Endothelial cell of umbilical vein (primary cell): ENCODE measurements at regions of chr12 and their contacts with region 1.

Region 1: DNA sequence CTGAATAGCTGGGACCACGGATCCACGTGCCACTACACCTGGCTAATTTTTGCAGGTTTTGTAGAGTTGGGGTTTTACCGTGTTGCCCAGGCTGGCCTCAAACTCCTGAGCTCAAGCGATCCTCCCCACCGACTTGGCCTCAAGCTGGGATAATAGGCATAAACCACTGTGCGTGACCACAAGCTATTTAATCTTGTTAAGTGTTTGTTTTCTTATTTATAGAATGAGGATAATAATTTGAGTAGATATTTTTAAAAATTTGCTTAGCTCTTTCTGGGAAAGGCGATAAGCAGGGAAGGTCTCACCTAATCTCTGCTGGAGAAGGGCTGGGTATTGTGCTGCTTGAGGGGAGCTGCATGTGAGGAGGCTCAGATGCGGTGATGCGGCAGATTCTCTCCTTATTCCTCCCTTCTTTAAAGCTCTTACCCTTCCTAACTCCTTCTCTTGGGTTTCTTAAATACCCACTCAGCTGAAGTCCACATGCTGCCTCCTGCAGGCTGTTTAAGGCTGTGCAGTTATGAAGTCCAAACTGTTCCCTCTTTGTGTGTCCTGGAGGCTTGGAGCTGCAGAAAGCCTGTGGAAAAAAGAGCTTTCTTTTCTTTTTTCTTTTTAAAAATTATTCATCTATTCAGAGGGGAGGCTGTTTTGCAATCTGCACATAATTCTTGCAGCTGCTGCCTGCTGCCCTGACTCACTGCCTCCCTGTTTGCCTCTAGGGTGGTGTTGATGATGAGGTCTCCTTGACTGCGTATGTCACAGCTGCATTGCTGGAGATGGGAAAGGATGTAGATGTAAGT is 37.9 kb downstream of the A2ML1 start:
- DNase-seq: peak; percentile 59
- H3K4me3 ChIP-seq: no peak overlapping the region
- H3K27ac ChIP-seq: no peak overlapping the region
- H3K4me1 ChIP-seq: no peaks in the 10 kb centered on the region
- H3K27me3 ChIP-seq: no peaks in the 10 kb centered on the region
- CTCF ChIP-seq: peak; percentile 66 to 70
- POLR2A ChIP-seq: no peak

Region 2: DNA sequence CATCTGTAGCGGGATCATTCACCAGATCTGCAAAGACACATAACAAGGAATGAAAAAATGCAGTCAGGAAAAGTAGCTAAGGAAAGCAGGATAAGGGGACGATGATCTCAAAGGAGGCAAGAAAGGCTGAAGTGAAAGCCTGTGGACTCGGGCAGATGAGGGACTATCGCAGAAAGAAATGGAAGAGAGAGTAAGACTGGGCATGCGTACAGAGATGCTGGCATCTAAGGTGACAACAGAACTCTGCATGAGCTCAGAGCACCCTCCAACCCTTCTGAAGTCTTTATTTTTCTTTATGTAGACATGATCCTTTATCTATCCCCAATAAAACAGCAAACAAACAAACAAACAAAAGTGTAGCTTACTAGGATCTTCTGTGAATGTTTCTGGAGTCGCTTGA is 204.9 kb before region 1 on chr12:
- CTCF ChIA-PET with region 1: interaction called, 167 read pairs
- POLR2A ChIA-PET with region 1: no interaction called
- dilution Hi-C with region 1: no loop called
- intact Hi-C with region 1: loop called (anchors 1 kb)
- DNase-seq: no peak
- H3K4me3 ChIP-seq: no peak overlapping the region
- H3K27ac ChIP-seq: no peak overlapping the region
- H3K4me1 ChIP-seq: no peaks in the 10 kb centered on the region
- H3K27me3 ChIP-seq: no peaks in the 10 kb centered on the region
- CTCF ChIP-seq: no peak
- POLR2A ChIP-seq: no peak

Region 3: DNA sequence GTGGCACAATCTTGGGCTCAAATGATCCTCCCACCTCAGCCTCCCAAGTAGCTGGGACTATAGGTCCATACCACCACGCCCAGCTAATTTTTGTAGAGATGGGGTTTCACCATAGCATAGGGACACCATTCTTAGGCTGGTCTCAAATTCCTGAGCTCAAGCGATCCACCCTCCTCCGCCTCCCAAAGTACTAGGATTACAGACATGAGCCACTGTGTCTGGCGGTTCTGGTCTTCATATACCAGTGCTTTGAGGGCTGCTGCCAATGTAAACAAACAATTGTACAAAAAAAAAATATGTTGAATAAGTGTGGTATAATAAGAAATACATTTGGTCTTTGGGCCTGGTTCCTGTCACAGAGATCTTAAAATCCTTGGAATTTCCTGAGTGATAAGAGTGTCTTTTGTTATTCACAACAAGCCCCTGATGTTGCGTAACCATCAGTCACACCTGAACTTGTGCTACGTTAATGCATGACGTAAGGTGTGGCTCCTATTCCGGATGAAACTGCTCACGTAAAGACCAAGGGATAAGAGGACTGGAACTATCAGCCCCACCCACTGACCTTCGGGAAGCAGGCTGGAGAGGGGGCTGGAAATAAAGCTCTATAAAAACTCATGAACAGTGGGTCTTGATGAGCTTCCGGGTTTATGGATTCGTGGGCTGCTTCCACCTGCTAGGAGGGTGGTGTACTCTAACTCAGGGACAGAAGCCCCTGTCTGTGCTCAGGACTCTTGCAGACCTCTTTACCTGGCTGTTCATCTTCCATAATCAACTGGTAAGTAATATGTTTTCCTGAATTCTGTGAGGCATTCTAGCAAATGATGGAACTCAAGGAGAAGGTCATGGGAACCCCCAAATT is 179.1 kb before region 1 on chr12:
- CTCF ChIA-PET with region 1: interaction called, 66 read pairs
- POLR2A ChIA-PET with region 1: no interaction called
- dilution Hi-C with region 1: no loop called
- intact Hi-C with region 1: loop called (anchors 1 kb)
- DNase-seq: peak; percentile 91
- H3K4me3 ChIP-seq: peak overlapping the region in 2 of 3 experiments; percentile 3 to 53
- H3K27ac ChIP-seq: peak overlapping the region; percentile 63
- H3K4me1 ChIP-seq: peaks cover 27% of the 10 kb centered on the region
- H3K27me3 ChIP-seq: no peaks in the 10 kb centered on the region
- CTCF ChIP-seq: no peak
- POLR2A ChIP-seq: no peak

Region 4: DNA sequence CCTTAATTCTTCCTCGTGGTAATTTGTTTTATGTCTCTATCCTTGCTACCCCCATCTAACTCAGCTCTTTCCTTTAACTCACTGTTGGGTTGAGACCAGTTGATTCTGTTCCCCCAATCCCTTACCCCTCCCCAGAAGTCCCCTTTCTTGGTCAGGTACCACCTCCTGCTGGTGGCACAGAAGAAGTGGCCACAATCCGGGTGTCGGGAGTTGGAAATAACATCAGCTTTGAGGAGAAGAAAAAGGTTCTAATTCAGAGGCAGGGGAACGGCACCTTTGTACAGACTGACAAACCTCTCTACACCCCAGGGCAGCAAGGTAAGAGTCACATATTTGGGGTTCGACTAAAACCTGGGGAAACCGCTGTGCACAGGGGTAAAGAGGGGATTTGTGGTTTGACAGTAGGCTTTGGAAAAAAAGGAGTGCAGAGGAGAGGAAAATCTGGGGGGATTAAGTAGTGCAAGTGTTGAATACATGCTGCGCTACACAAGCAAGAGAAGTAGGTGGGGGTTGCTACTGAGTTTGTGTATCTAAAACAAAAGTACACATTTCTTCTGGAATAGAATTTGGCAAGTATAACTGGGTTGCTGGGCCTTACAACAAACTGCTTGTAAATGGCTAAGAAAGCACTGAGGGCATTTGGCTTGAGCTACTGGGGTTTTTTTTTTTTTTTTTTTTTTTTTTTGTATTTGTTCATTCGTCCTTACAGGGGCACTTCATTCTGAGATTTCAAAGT is 36.6 kb before region 1 on chr12:
- CTCF ChIA-PET with region 1: interaction called, 31 read pairs
- POLR2A ChIA-PET with region 1: no interaction called
- dilution Hi-C with region 1: no loop called
- intact Hi-C with region 1: no loop called
- DNase-seq: peak; percentile 53
- H3K4me3 ChIP-seq: no peak overlapping the region
- H3K27ac ChIP-seq: no peak overlapping the region
- H3K4me1 ChIP-seq: no peaks in the 10 kb centered on the region
- H3K27me3 ChIP-seq: peaks cover 1 to 3% of the 10 kb centered on the region in 2 experiments
- CTCF ChIP-seq: peak; percentile 62 to 65
- POLR2A ChIP-seq: no peak

Region 5: DNA sequence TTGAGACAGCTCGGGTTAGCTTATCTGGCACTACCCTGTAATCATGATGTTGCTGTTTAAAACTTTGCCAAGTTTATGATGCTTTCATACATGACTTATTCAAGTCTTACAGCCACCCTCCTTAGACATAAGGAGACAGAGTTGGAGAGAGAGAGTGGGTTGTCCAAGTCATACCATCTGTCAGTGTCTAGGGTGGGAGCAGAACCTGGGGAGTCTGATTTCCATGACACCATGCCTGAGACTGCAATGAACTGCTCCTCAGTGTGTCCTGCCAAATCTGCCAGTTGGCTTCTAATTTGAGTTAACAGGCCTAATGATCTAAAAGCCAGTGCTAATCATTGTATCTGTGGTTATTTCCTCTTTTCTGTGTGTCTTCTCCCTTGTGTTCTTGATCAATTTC is 10.2 kb after region 1 on chr12:
- CTCF ChIA-PET with region 1: interaction called, 11 read pairs
- POLR2A ChIA-PET with region 1: no interaction called
- dilution Hi-C with region 1: no loop called
- intact Hi-C with region 1: no loop called
- DNase-seq: no peak
- H3K4me3 ChIP-seq: no peak overlapping the region
- H3K27ac ChIP-seq: no peak overlapping the region
- H3K4me1 ChIP-seq: no peaks in the 10 kb centered on the region
- H3K27me3 ChIP-seq: no peaks in the 10 kb centered on the region
- CTCF ChIP-seq: no peak
- POLR2A ChIP-seq: no peak